Activated B cell treated with CpG ODN at 0.5 μM for 24 hours (primary cell): ENCODE measurements at regions of chr20 and their contacts with region 1.

Region 1: GRCh38 chr20:51639206-51639832 is 96.8 kb upstream of the NFATC2 start:
- DNase-seq: peak; percentile 33
- ATAC-seq: peak; percentile 74
- H3K4me3 Mint-ChIP-seq: no peak overlapping the region
- H3K27ac Mint-ChIP-seq: no peak overlapping the region
- H3K4me1 Mint-ChIP-seq: no peaks in the 10 kb centered on the region
- H3K27me3 Mint-ChIP-seq: peaks cover 7% of the 10 kb centered on the region
- CTCF ChIP-seq: no peak

Region 2: DNA sequence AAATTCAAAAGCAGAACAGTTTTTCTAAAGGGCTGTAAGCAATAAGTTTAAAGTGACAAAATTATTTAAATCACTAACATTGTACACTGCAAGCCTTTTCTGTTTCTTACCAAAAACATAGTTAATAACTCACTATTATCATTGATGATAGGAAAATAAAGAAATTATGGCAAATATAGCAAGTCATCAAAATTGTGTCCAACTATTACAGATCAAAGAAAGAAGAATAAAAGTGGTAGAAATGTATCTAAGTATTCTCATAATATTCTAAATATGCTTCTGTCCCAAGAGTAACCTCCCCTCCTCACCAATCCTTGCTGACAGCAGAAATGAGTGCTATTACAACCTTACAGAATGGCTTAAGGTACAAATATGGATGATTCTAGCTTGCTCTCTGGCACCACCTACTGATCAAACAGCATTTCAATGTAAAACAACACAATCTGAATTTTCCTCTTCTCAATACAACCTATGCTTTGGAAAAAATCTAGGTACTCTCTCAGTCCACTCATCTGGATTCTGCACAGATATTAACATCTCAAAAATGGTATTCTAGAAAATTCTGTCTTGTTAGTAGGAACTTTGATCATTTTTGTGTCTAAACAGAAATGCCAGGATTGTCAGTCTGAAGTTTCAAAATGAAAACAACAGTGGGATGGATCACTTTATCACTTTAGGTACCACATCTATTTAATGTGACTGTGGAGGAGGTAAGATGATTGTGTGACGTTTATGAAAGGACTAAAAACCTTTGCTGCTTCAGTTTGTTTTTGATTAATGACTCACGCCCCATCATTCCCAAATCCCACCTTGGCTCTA is 511.3 kb after region 1 on chr20:
- CTCF ChIA-PET with region 1: no interaction called
- POLR2A ChIA-PET with region 1: no interaction called
- intact Hi-C with region 1: loop called (anchors 1 kb)
- DNase-seq: no peak
- ATAC-seq: no peak
- H3K4me3 Mint-ChIP-seq: no peak overlapping the region
- H3K27ac Mint-ChIP-seq: no peak overlapping the region
- H3K4me1 Mint-ChIP-seq: no peaks in the 10 kb centered on the region
- H3K27me3 Mint-ChIP-seq: no peaks in the 10 kb centered on the region
- CTCF ChIP-seq: peak; percentile 36